Activated B cell treated with CpG ODN at 0.5 μM for 24 hours (primary cell): ENCODE measurements at regions of chr1 and their contacts with region 1.

Region 1: DNA sequence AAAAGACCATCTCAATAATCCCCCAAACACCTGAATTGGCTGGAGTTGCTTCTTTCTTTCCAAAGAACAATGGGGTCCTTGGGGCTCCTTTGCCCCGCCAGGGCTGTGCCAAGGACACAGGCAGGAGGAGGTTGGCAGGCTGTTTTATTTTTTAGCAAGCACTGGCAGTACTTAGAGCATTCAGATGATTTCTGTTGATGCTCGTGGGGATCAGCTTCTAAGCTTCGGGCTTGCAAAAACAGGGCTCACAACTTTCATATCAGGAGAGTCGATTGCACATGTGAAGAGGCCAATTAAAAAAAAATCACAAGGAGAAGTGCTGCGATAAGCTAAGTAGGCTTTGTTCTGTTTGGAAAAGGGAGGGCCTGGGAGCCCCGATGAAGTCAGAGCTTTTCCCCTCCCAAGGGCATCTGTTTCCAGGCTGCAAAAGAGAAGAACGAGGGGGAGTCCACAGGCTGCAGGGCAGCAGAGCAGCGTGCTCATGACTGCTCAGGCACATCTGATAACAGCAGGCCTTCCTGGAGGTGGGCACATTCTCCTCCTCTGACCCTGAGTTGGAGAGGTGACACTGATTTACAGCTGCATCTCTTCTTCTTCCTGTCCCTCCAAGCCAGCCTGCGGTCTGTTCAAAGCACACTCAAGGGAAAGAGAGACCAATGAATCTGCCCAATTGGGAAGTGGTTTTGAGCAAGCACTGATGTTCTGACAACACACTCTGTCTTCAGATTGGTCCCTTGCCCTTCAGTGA is 27.3 kb upstream of the BCAR3 start:
- DNase-seq: no peak
- ATAC-seq: no peak
- H3K4me3 Mint-ChIP-seq: peak overlapping the region; percentile 72
- H3K27ac Mint-ChIP-seq: peak overlapping the region; percentile 90
- H3K4me1 Mint-ChIP-seq: peaks cover 68% of the 10 kb centered on the region
- H3K27me3 Mint-ChIP-seq: no peaks in the 10 kb centered on the region
- CTCF ChIP-seq: no peak

Region 2: GRCh38 chr1:93734999-93735398 is 26.1 kb after region 1 on chr1:
- CTCF ChIA-PET with region 1: interaction called, 5 read pairs
- POLR2A ChIA-PET with region 1: no interaction called
- intact Hi-C with region 1: loop called (anchors 2 kb)
- DNase-seq: no peak
- ATAC-seq: peak; percentile 28
- H3K4me3 Mint-ChIP-seq: no peak overlapping the region
- H3K27ac Mint-ChIP-seq: no peak overlapping the region
- H3K4me1 Mint-ChIP-seq: peaks cover 14% of the 10 kb centered on the region
- H3K27me3 Mint-ChIP-seq: no peaks in the 10 kb centered on the region
- CTCF ChIP-seq: no peak

Region 3: GRCh38 chr1:93768380-93768863 is 59.5 kb after region 1 on chr1:
- CTCF ChIA-PET with region 1: no interaction called
- POLR2A ChIA-PET with region 1: no interaction called
- intact Hi-C with region 1: no loop called
- DNase-seq: no peak
- ATAC-seq: no peak
- H3K4me3 Mint-ChIP-seq: no peak overlapping the region
- H3K27ac Mint-ChIP-seq: no peak overlapping the region
- H3K4me1 Mint-ChIP-seq: no peaks in the 10 kb centered on the region
- H3K27me3 Mint-ChIP-seq: no peaks in the 10 kb centered on the region
- CTCF ChIP-seq: no peak

Region 4: DNA sequence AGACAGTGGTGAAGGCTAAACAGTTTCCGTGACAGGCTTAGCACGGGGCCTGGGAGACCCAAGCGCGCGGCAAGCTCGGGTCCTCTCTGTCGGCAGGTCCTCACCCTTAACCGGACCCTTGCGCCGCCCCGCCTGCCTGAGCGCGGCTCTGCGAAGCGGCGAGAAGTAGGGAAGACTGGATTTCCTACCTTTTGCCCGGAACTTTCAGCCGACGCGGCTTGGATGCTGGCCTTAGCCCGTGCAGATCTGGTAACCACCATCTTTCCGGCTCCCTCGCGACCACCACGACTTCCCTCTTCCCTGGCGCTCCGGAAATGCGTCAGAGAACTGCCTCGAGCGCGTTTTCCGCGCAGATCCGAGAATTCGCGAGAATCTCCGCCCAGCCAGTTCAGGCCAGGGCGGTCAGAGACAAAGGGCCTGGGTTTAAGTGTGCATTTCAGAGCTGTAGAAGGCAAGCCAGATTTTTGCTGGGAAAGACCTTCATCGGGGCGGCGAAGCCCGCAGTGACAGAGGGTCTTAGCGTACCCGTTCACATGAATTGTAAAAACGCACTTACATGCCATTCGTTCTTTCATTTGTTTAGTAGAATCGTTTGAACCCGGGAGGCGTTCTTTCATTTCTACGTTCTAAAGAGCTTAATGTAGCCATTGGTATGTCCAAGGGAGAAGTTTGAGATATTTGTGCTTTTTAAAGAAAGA is 170.1 kb after region 1 on chr1 and contains the start of gene DNTTIP2:
- CTCF ChIA-PET with region 1: no interaction called
- POLR2A ChIA-PET with region 1: no interaction called
- intact Hi-C with region 1: no loop called
- DNase-seq: peak; percentile 77
- ATAC-seq: peak; percentile 91
- H3K4me3 Mint-ChIP-seq: peak within 1 kb of the TSS; percentile 96
- H3K27ac Mint-ChIP-seq: peak within 1 kb of the TSS; percentile 97
- H3K4me1 Mint-ChIP-seq: peaks cover 48% of the 10 kb centered on the region
- H3K27me3 Mint-ChIP-seq: no peaks in the 10 kb centered on the region
- CTCF ChIP-seq: no peak
- total RNA-seq, gene DNTTIP2: 65.6 and 69.7 TPM in 2 replicates